ENCODE measurements at regions of chr3 and their contacts with region 1.

Region 1: GRCh38 chr3:124078953-124079911 is 87.3 kb upstream of the ROPN1 start:
- DNase-seq: peak; percentile 9
- H3K4me3 ChIP-seq: no peak overlapping the region
- H3K27ac ChIP-seq: no peak overlapping the region
- H3K4me1 ChIP-seq: no peaks in the 10 kb centered on the region
- H3K27me3 ChIP-seq: no peaks in the 10 kb centered on the region
- CTCF ChIP-seq: peak; percentile 67 to 79

Region 2: GRCh38 chr3:123642182-123642956 is 436.9 kb before region 1 on chr3:
- CTCF ChIA-PET with region 1: no interaction called
- dilution Hi-C with region 1: no loop called
- in situ Hi-C with region 1: no loop called
- intact Hi-C with region 1: loop called (anchors 2 kb)
- DNase-seq: peak; percentile 77
- H3K4me3 ChIP-seq: no peak overlapping the region
- H3K27ac ChIP-seq: no peak overlapping the region
- H3K4me1 ChIP-seq: peaks cover 19% of the 10 kb centered on the region
- H3K27me3 ChIP-seq: no peaks in the 10 kb centered on the region
- CTCF ChIP-seq: peak; percentile 79 to 95

Region 3: DNA sequence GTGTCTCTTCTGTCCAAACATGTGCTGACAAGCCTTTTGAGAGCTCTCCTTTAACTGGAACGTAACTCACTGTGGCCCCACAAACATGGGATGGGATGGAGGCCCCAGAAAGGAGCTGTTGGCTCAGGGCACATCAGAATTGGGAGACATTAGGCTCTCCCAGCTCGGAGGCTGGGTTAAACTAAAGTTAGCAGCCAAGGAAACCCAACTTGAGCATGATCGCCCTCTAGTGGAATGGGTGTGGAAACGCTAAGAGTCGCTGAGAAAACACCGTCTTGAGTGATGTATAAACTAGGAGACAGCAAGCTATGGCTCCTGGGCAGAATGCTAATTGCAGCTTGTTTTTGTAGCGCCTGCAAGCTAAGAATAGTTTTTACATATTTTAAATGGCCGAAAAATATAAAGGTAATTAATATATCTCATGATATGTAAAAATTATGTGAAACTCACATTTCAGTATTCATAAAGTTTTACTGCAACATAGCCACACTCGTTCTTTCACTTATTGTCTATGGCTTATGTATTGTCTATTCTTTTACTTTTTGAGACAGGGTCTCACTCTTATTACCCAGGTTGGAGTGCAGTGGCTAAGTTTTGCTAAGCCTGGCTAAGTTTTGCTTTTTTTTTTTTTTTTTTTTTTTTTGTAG is 355.6 kb before region 1 on chr3:
- CTCF ChIA-PET with region 1: no interaction called
- dilution Hi-C with region 1: no loop called
- in situ Hi-C with region 1: no loop called
- intact Hi-C with region 1: loop called (anchors 5 kb)
- DNase-seq: peak; percentile 66
- H3K4me3 ChIP-seq: no peak overlapping the region
- H3K27ac ChIP-seq: no peak overlapping the region
- H3K4me1 ChIP-seq: peaks cover 7% of the 10 kb centered on the region
- H3K27me3 ChIP-seq: no peaks in the 10 kb centered on the region
- CTCF ChIP-seq: peak; percentile 87 to 92

Region 4: DNA sequence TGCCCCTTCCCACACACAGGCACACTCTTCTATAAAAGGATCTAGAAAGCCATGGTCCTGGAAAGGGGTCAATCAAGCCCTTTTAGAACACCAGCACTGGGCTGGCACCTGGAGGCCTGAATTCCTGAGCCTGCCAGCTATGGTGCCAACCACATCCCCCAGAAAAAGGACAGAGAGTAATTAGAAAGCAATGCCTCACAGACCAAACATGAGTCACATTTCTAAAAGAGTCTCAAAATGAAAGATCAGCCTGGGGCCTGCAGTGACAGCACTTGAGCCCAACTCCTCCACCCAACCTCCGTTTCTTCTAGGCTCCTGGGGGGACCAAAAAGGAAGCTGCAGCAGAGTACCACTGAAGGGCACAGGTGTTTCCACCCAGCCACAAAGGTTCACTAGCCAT is 209.2 kb before region 1 on chr3:
- CTCF ChIA-PET with region 1: no interaction called
- dilution Hi-C with region 1: no loop called
- in situ Hi-C with region 1: no loop called
- intact Hi-C with region 1: no loop called
- DNase-seq: peak; percentile 77
- H3K4me3 ChIP-seq: no peak overlapping the region
- H3K27ac ChIP-seq: peak overlapping the region; percentile 31
- H3K4me1 ChIP-seq: peaks cover 31% of the 10 kb centered on the region
- H3K27me3 ChIP-seq: no peaks in the 10 kb centered on the region
- CTCF ChIP-seq: no peak

Region 5: GRCh38 chr3:123941121-123941520 is 138.1 kb before region 1 on chr3:
- CTCF ChIA-PET with region 1: no interaction called
- dilution Hi-C with region 1: no loop called
- in situ Hi-C with region 1: no loop called
- intact Hi-C with region 1: loop called (anchors 1 kb)
- DNase-seq: no peak
- H3K4me3 ChIP-seq: no peak overlapping the region
- H3K27ac ChIP-seq: no peak overlapping the region
- H3K4me1 ChIP-seq: no peaks in the 10 kb centered on the region
- H3K27me3 ChIP-seq: no peaks in the 10 kb centered on the region
- CTCF ChIP-seq: peak in 1 of 2 donors; percentile 23

Region 6: DNA sequence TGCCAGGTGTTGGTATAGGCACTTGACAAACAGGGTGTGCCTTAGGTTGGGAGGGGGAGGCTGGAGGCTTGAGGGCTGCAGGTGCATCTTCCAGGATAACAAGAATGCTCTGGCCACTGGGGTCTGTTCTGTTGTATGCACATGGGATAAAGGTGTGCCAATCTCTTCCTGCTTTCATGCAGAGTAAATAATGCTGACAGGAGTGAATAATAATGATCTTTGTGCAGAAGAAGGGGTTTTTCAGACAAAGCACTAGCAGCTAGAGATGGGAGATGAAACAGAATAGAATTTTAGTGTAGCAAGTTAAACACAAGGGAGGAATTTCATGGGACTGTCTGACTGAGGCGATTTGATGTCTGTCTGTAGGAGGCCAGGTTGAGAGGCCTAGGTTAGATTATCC is 85.4 kb before region 1 on chr3:
- CTCF ChIA-PET with region 1: no interaction called
- dilution Hi-C with region 1: no loop called
- in situ Hi-C with region 1: no loop called
- intact Hi-C with region 1: no loop called
- DNase-seq: no peak
- H3K4me3 ChIP-seq: no peak overlapping the region
- H3K27ac ChIP-seq: no peak overlapping the region
- H3K4me1 ChIP-seq: no peaks in the 10 kb centered on the region
- H3K27me3 ChIP-seq: peaks cover 7% of the 10 kb centered on the region
- CTCF ChIP-seq: no peak

Region 7: DNA sequence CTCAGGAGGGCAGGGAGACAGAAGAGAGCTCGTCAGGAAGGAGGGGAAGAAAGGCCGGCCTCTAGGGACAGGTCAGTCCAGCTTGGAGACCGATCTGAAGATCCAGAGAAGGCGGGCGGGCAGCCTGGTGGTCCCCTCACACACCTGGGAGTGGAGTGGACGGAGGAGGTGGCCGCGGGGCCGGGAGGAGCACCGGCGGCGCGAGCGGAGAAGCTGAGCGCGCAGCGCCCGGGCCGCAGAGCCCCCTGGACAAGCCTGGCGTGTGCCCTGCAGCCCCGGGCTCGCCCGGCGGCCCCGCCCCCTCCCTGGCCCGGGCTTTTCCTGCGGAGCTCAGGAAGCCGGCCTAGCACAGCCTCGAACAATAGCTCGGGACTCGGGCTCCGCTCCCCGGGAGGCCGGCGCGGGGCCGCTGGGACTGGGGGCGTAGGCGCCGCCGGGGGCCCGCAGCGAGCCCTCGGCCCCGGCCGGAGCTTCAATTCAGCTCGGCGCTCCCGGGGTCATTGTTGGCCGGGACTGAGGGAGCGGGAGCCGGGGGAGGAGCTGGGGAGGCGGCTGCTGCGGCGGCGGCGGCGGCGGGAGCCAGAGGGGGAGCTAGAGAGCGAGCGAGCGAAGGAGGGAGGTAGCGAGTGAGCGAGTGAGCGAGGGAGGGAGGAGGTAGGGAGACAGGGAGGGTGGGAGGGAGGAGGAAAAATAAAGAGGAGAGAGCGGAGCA is 46.4 kb before region 1 on chr3:
- CTCF ChIA-PET with region 1: interaction called, 11 read pairs
- dilution Hi-C with region 1: loop called (anchors 5 kb)
- in situ Hi-C with region 1: no loop called
- intact Hi-C with region 1: no loop called
- DNase-seq: peak; percentile 77
- H3K4me3 ChIP-seq: peak overlapping the region; percentile 38 to 55 (median 49)
- H3K27ac ChIP-seq: peak overlapping the region; percentile 28
- H3K4me1 ChIP-seq: peaks cover 5% of the 10 kb centered on the region
- H3K27me3 ChIP-seq: peaks cover 15% of the 10 kb centered on the region
- CTCF ChIP-seq: peak; percentile 27 to 64